ENCODE measurements at regions of chr13 and their contacts with region 1.

Region 1: DNA sequence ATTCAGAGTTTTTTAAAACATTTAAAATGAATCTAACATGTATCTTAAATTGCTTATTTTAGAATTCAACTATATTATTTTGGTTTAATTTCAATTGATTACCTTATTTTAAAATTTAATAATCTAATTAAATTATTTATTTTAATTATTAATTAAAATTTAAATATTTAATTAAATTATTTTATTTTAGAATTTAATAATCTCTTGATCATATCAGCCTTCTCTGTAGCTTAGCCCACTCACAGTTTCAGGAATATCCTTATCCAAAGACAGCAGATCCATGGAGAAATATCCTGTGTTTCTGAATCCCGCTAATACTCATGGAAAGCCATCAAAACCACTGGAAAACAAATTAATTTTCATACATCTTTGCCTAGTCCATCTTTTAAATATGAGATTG is 1669.2 kb downstream of the PCDH9 start:
- DNase-seq: no peak

Region 2: GRCh38 chr13:65530688-65531087 is 30.2 kb before region 1 on chr13:
- intact Hi-C with region 1: loop called in 1 of 2 experiments (anchors 2 kb)
- DNase-seq: no peak

Region 3: GRCh38 chr13:65597839-65598818 is 37.2 kb after region 1 on chr13:
- intact Hi-C with region 1: no loop called
- DNase-seq: no peak